SK-MEL-5 (cell line): ENCODE measurements at regions of chr7 and their contacts with region 1.

Region 1: GRCh38 chr7:124813994-124814798 is 48.6 kb upstream of the GPR37 start:
- DNase-seq: no peak

Region 2: DNA sequence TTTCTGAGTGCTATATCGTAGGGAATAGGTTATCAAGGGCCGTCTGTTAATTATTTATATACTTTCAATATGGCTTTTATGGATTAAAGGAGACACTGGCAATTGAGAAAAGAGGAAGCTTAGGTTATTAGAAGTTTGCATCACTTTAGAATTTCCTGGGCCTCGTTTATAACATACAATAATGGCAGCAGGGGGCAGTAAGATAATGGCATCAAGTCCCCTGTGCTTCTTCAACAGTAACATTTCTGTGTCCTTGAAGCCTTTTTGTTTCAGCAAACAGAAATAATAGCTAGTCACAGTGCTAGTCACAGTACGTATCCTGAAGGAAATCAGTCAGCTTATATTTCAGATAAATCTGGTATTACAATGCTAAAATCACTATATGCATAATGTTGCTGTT is 847.3 kb before region 1 on chr7:
- in situ Hi-C with region 1: loop called (anchors 25 kb)
- DNase-seq: peak; percentile 69

Region 3: GRCh38 chr7:124152859-124153692 is 661.1 kb before region 1 on chr7:
- in situ Hi-C with region 1: loop called (anchors 25 kb)
- DNase-seq: peak; percentile 89